Psoas muscle (tissue), 8 donors: ENCODE measurements at regions of chr3 and their contacts with region 1.

Region 1: GRCh38 chr3:33131331-33132018 is 17.7 kb downstream of the CRTAP start:
- DNase-seq: no peak
- ATAC-seq: peak; percentile 65 to 90 (median 74)
- H3K4me3 ChIP-seq: no peak overlapping the region
- H3K27ac ChIP-seq: no peak overlapping the region
- H3K4me1 ChIP-seq: no peaks in the 10 kb centered on the region
- H3K27me3 ChIP-seq: no peaks in the 10 kb centered on the region
- CTCF ChIP-seq: peak; percentile 76

Region 2: GRCh38 chr3:32564196-32564595 is 567.3 kb before region 1 on chr3:
- intact Hi-C with region 1: no loop called
- DNase-seq: no peak
- ATAC-seq: no peak
- H3K4me3 ChIP-seq: no peak overlapping the region
- H3K27ac ChIP-seq: no peak overlapping the region
- H3K4me1 ChIP-seq: peaks cover 20% of the 10 kb centered on the region
- H3K27me3 ChIP-seq: no peaks in the 10 kb centered on the region
- CTCF ChIP-seq: no peak

Region 3: DNA sequence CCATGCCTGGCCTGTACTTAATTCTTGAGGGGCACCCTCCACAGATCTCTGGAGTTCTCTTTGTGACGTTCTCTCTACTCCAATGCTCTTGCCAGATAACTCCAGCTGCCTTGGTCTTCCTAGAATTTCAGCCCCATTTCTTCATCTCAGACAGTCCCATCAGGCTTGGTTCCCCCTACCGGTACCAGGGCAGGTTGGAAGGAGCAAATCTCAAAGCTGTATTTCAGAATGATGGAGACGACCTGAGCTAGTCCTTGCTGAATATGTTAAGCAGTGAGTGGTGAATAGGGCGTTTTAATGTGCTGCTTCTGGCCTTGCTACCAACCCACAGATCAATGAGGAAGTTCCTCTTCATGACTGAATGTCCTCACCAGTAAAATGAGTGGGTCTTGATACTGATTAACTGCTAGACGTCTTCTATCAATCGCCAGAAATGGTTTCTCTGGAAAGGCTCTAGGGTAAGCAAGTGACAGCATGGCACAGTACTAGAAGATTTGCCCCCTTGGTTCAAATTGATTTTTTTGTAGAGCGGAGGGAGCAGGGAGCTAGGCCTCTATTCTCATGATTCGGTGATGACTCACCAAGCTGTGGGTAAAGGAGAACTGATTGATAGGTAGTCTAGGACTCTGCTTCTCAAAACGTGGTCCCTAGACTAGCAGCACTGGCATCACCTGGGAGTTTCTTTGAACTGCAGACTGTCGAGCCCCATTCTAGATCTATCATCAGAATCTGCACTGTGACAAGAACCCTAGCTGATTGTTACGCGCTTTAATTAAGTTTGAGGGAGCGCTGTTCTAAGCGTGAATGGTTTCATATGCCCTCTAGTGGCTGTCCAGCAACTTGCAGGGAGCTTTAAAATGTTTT is 241.0 kb after region 1 on chr3:
- intact Hi-C with region 1: loop called (anchors 1 to 2 kb)
- DNase-seq: no peak
- ATAC-seq: peak; percentile 51 to 80 (median 63)
- H3K4me3 ChIP-seq: no peak overlapping the region
- H3K27ac ChIP-seq: no peak overlapping the region
- H3K4me1 ChIP-seq: no peaks in the 10 kb centered on the region
- H3K27me3 ChIP-seq: no peaks in the 10 kb centered on the region
- CTCF ChIP-seq: peak; percentile 84

Region 4: GRCh38 chr3:33467786-33468185 is 336.3 kb after region 1 on chr3:
- intact Hi-C with region 1: no loop called
- DNase-seq: no peak
- ATAC-seq: no peak
- H3K4me3 ChIP-seq: no peak overlapping the region
- H3K27ac ChIP-seq: no peak overlapping the region
- H3K4me1 ChIP-seq: no peaks in the 10 kb centered on the region
- H3K27me3 ChIP-seq: no peaks in the 10 kb centered on the region
- CTCF ChIP-seq: no peak

Region 5: GRCh38 chr3:33787328-33788009 is 656.0 kb after region 1 on chr3:
- intact Hi-C with region 1: loop called in 1 of 2 experiments (anchors 10 kb)
- DNase-seq: peak in 1 of 2 donors; percentile 31
- ATAC-seq: peak; percentile 71 to 96 (median 88)
- H3K4me3 ChIP-seq: peak overlapping the region; percentile 4
- H3K27ac ChIP-seq: no peak overlapping the region
- H3K4me1 ChIP-seq: no peaks in the 10 kb centered on the region
- H3K27me3 ChIP-seq: no peaks in the 10 kb centered on the region
- CTCF ChIP-seq: peak; percentile 76

Region 6: GRCh38 chr3:33868309-33868708 is 736.8 kb after region 1 on chr3:
- intact Hi-C with region 1: no loop called
- DNase-seq: no peak
- ATAC-seq: no peak
- H3K4me3 ChIP-seq: no peak overlapping the region
- H3K27ac ChIP-seq: no peak overlapping the region
- H3K4me1 ChIP-seq: no peaks in the 10 kb centered on the region
- H3K27me3 ChIP-seq: no peaks in the 10 kb centered on the region
- CTCF ChIP-seq: no peak